Endothelial cell of umbilical vein (primary cell): ENCODE measurements at regions of chr19 and their contacts with region 1.

Region 1: GRCh38 chr19:8423817-8424223 is 10.7 kb downstream of the MARCHF2 start:
- DNase-seq: peak; percentile 96
- H3K4me3 ChIP-seq: peak overlapping the region in 1 of 3 experiments; percentile 7
- H3K27ac ChIP-seq: peak overlapping the region; percentile 97
- H3K4me1 ChIP-seq: peaks cover 13% of the 10 kb centered on the region
- H3K27me3 ChIP-seq: no peaks in the 10 kb centered on the region
- CTCF ChIP-seq: no peak
- POLR2A ChIP-seq: no peak

Region 2: DNA sequence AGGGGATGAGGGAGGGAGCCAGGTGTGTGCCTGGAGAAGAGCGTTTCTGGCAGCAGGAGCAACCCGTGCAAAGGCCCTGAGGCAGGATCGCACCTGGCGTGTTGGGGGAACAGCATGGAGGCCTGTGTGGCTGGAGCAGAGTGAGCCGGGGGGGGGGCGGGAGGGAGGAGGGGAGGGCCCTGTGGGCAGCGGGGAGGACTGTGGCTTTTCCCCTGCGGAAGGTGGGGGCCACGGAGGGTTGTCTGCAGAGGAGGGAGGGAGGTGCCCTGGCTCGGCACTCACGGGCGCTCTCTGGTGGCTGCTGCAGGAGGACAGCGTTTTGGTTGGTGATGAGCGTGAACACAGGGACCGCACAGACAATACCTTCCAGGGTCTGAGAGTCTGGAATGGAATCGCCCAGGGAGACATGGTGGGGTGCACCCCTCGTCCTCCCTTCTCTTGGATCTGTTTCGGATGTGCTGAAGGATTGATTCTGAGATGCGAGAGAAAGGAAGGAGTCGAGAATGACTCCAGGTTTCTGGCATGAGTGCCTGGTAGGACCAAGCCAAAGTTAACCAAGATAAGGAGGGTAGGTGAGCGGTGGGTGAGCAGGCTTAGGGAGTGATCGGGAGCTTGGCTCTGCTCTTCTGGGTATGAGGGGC is 27.1 kb before region 1 on chr19:
- CTCF ChIA-PET with region 1: interaction called, 5 read pairs
- POLR2A ChIA-PET with region 1: no interaction called
- dilution Hi-C with region 1: no loop called
- intact Hi-C with region 1: loop called (anchors 1 kb)
- DNase-seq: peak; percentile 74
- H3K4me3 ChIP-seq: no peak overlapping the region
- H3K27ac ChIP-seq: peak overlapping the region; percentile 23
- H3K4me1 ChIP-seq: peaks cover 28% of the 10 kb centered on the region
- H3K27me3 ChIP-seq: no peaks in the 10 kb centered on the region
- CTCF ChIP-seq: peak; percentile 75 to 91
- POLR2A ChIP-seq: no peak

Region 3: GRCh38 chr19:8438236-8438635 is 14.4 kb after region 1 on chr19:
- CTCF ChIA-PET with region 1: interaction called, 7 read pairs
- POLR2A ChIA-PET with region 1: interaction called, 3 read pairs
- dilution Hi-C with region 1: no loop called
- intact Hi-C with region 1: loop called (anchors 1 kb)
- DNase-seq: no peak
- H3K4me3 ChIP-seq: no peak overlapping the region
- H3K27ac ChIP-seq: no peak overlapping the region
- H3K4me1 ChIP-seq: peaks cover 4% of the 10 kb centered on the region
- H3K27me3 ChIP-seq: no peaks in the 10 kb centered on the region
- CTCF ChIP-seq: no peak
- POLR2A ChIP-seq: no peak

Region 4: GRCh38 chr19:8444645-8445487 is 21.0 kb after region 1 on chr19 and contains the start of gene HNRNPM:
- CTCF ChIA-PET with region 1: interaction called, 6 read pairs
- POLR2A ChIA-PET with region 1: interaction called, 11 read pairs
- dilution Hi-C with region 1: no loop called
- intact Hi-C with region 1: loop called (anchors 1 kb)
- DNase-seq: peak; percentile 99
- H3K4me3 ChIP-seq: peak within 1 kb of the TSS; percentile 81 to 98 (median 84)
- H3K27ac ChIP-seq: peak within 1 kb of the TSS; percentile 93
- H3K4me1 ChIP-seq: peaks cover 25% of the 10 kb centered on the region
- H3K27me3 ChIP-seq: no peaks in the 10 kb centered on the region
- CTCF ChIP-seq: no peak
- POLR2A ChIP-seq: peak; percentile 77
- total RNA-seq, gene HNRNPM: 288 and 301 TPM in 2 replicates

Region 5: GRCh38 chr19:8473648-8474476 is 50.0 kb after region 1 on chr19:
- CTCF ChIA-PET with region 1: no interaction called
- POLR2A ChIA-PET with region 1: no interaction called
- dilution Hi-C with region 1: no loop called
- intact Hi-C with region 1: no loop called
- DNase-seq: no peak
- H3K4me3 ChIP-seq: no peak overlapping the region
- H3K27ac ChIP-seq: no peak overlapping the region
- H3K4me1 ChIP-seq: no peaks in the 10 kb centered on the region
- H3K27me3 ChIP-seq: no peaks in the 10 kb centered on the region
- CTCF ChIP-seq: no peak
- POLR2A ChIP-seq: no peak